Right cardiac atrium (tissue), 5 donors: ENCODE measurements at regions of chr1 and their contacts with region 1.

Region 1: GRCh38 chr1:15885701-15886610 is 38.4 kb downstream of the SPEN start:
- DNase-seq: peak; percentile 98 to 99 (median 99)
- ATAC-seq: peak; percentile 99
- H3K4me3 ChIP-seq: peak overlapping the region; percentile 47
- H3K27ac ChIP-seq: peak overlapping the region; percentile 98
- H3K4me1 ChIP-seq: peaks cover 3% of the 10 kb centered on the region
- H3K27me3 ChIP-seq: no peaks in the 10 kb centered on the region

Region 2: GRCh38 chr1:15538770-15539169 is 347.2 kb before region 1 on chr1:
- intact Hi-C with region 1: no loop called
- DNase-seq: no peak
- ATAC-seq: no peak
- H3K4me3 ChIP-seq: no peak overlapping the region
- H3K27ac ChIP-seq: no peak overlapping the region
- H3K4me1 ChIP-seq: no peaks in the 10 kb centered on the region
- H3K27me3 ChIP-seq: no peaks in the 10 kb centered on the region

Region 3: DNA sequence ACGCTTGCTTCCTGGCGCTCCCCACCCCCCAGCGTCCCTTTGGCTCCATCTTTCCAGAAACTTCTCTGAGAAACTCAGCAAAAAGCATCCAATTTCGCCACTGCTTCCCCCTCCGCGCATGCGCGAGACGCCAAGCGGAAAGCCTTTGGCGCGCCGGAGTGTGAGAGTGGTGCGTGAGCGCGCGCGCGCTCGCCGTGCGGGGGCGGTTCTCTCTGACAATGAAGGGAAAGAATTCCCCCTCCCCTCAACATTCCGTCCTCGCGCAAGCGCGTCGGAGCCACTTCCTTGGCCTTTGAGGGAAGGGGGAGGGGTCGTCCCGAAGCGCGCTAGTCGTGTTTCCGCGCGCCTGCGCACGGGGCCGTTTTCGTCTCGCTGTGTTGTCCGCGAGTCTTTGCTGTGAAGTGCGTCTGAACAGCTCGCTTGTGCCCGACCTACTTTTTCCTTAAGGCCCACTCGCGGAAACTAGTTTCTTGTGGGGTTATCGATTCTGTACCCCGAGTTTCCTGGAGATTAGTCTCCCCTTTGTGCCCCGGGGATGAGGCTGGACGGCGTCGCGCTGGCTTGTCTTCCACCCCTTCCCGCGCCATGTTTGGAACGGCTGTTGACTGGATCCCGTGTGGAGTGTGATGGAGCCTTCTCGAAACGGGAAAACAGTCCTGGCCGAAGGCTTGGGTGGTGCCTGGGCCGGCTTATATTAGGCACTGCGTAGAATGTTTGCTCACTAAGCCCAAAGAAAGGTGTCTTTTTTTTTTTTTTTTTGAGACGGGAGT is 50.0 kb before region 1 on chr1:
- intact Hi-C with region 1: loop called in 1 of 4 experiments (anchors 10 kb)
- DNase-seq: peak; percentile 100
- ATAC-seq: peak; percentile 91
- H3K4me3 ChIP-seq: peak overlapping the region; percentile 77
- H3K27ac ChIP-seq: peak overlapping the region; percentile 97
- H3K4me1 ChIP-seq: peaks cover 2% of the 10 kb centered on the region
- H3K27me3 ChIP-seq: no peaks in the 10 kb centered on the region

Region 4: GRCh38 chr1:15847100-15847892 is 38.7 kb before region 1 on chr1 and contains the start of gene SPEN:
- intact Hi-C with region 1: loop called in 1 of 4 experiments (anchors 5 kb)
- DNase-seq: peak; percentile 99 to 100 (median 100)
- ATAC-seq: peak; percentile 94 to 95
- H3K4me3 ChIP-seq: peak within 1 kb of the TSS; percentile 100
- H3K27ac ChIP-seq: peak within 1 kb of the TSS; percentile 100
- H3K4me1 ChIP-seq: peaks cover 3% of the 10 kb centered on the region
- H3K27me3 ChIP-seq: no peaks in the 10 kb centered on the region
- total RNA-seq, gene SPEN: 25.9 to 34.2 (median 31.9) TPM

Region 5: DNA sequence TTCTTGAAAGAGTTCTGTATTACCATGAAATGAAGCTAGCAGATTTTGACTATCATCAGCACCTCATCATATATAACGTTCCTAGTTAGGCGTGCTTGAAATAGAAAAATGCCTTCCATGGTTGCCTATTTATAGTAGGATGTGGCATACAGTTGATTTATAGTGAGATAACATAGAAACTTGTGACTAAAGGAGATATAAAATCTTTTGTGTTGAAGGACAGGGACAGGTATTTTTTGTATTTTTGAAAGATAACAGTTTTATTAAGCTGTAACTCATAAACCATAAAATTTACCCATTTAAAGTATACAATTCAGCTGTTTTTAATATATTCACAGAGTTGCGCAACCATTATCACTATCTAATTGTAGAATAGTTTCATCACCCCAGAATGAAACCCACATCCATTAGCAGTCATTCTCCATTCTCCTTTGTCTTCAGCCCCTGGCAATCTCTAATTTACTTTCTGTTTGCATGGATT is 19.2 kb before region 1 on chr1:
- intact Hi-C with region 1: no loop called
- DNase-seq: no peak
- ATAC-seq: no peak
- H3K4me3 ChIP-seq: no peak overlapping the region
- H3K27ac ChIP-seq: no peak overlapping the region
- H3K4me1 ChIP-seq: peaks cover 10% of the 10 kb centered on the region
- H3K27me3 ChIP-seq: no peaks in the 10 kb centered on the region